ENCODE measurements at regions of chr12 and their contacts with region 1.

Region 1: GRCh38 chr12:11581179-11581755 is 68.2 kb upstream of the ETV6 start:
- DNase-seq: peak in 3 of 10 donors; percentile 42 to 62 (median 51)
- H3K4me3 ChIP-seq: no peak overlapping the region
- H3K27ac ChIP-seq: no peak overlapping the region
- H3K27me3 ChIP-seq: no peaks in the 10 kb centered on the region
- CTCF ChIP-seq: peak; percentile 66 to 95 (median 82)

Region 2: DNA sequence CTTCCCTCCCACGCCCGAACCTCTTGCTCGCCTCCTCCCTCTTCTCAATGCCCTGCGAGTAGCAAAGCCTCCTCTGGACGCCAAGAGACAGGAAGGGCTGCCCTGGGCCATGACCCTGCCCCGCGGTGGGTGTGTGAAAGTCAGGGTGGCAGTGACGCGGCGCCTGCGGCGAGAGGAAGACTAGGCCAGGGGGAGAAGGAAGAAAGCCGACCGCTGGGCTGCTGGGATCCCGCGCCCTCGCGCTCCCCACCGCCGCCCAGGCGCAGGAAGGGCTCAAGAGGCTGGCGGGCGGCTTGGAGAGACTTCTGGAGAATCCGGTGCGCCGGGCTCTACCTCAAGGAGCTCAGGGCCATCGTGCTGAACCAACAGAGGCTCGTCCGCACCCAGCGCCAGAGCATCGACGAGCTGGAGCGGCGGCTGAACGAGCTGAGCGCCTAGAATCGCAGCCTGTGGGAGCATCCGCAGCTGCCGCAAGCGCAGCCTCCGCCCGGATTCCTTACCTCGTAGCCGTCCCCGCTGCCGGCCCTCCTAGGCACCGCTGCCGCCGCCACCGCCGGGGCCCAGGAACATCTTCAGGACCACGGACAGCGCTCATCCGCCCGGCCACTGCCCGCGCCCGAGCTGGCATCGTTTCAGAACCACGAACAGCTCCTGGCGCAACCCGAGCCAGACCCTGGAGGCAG is 80.9 kb before region 1 on chr12:
- intact Hi-C with region 1: no loop called
- DNase-seq: peak; percentile 27 to 80 (median 64)
- H3K4me3 ChIP-seq: peak overlapping the region in 58 of 59 donors; percentile 23 to 71 (median 55)
- H3K27ac ChIP-seq: peak overlapping the region in 57 of 59 donors; percentile 24 to 92 (median 82)
- H3K27me3 ChIP-seq: no peaks in the 10 kb centered on the region
- CTCF ChIP-seq: peak in 27 of 56 donors; percentile 10 to 47 (median 25)

Region 3: DNA sequence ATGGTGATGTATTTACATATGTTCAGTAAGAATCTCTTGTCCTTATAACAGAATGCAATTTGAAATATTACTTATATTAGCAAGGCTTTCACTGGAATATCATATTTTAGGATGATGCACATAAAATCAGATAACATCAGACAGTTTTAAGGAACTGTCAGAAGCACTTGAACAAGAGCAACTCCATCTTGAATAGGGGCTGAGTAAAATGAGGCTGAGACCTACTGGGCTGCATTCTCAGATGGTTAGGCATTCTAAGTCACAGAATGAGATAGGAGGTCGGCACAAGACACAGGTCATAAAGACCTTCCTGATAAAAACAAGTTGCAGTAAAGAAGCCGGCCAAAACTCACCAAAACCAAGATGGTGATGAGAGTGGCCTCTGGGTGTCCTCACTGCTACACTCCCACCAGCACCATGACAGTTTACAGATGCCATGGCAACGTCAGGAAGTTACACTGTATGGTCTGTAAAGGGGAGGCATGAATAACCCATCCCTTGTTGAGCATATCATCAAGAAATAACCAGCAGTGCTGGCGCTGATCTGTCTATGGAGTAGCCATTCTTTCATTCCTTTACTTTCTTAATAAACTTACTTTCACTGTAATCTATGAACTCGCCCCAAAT is 40.6 kb after region 1 on chr12:
- intact Hi-C with region 1: loop called in 1 of 2 experiments (anchors 1 kb)
- DNase-seq: peak in 2 of 10 donors; percentile 15 to 35
- H3K4me3 ChIP-seq: no peak overlapping the region
- H3K27ac ChIP-seq: no peak overlapping the region
- H3K27me3 ChIP-seq: no peaks in the 10 kb centered on the region
- CTCF ChIP-seq: peak in 50 of 56 donors; percentile 11 to 70 (median 44)

Region 4: GRCh38 chr12:12032851-12033588 is 451.8 kb after region 1 on chr12:
- intact Hi-C with region 1: loop called (anchors 1 kb)
- DNase-seq: peak; percentile 67 to 89 (median 80)
- H3K4me3 ChIP-seq: peak overlapping the region; percentile 24 to 71 (median 53)
- H3K27ac ChIP-seq: peak overlapping the region in 55 of 59 donors; percentile 22 to 90 (median 79)
- H3K27me3 ChIP-seq: no peaks in the 10 kb centered on the region
- CTCF ChIP-seq: peak; percentile 82 to 97 (median 91)

Region 5: DNA sequence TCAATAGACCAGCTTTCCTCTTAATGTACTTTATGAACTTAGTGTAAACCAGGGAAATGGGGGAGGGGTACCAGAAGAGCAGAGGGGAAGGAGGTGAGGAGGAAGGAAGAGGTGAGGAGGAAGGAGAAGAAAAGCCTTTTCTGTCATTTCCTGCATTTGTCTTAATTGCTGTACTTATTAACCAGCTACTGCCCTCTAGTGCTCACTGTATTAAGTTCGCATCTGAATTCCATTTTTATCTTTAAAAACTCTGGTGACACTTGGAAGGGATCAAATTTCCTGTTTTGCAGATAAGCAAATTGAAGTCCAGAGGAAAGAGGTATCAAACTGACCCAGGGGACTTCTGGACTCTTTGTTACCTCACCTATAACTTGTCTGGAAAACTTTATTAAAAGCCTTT is 746.5 kb after region 1 on chr12:
- intact Hi-C with region 1: loop called in 1 of 2 experiments (anchors 10 kb)
- DNase-seq: no peak
- H3K4me3 ChIP-seq: peak overlapping the region in 1 of 59 donors; percentile 25
- H3K27ac ChIP-seq: peak overlapping the region in 13 of 59 donors; percentile 9 to 38 (median 21)
- H3K27me3 ChIP-seq: no peaks in the 10 kb centered on the region
- CTCF ChIP-seq: peak; percentile 43 to 91 (median 75)

Region 6: GRCh38 chr12:12704593-12705230 is 1123.4 kb after region 1 on chr12:
- intact Hi-C with region 1: loop called in 1 of 2 experiments (anchors 10 kb)
- DNase-seq: peak in 7 of 10 donors; percentile 47 to 73 (median 59)
- H3K4me3 ChIP-seq: peak overlapping the region in 3 of 59 donors; percentile 2 to 24 (median 2)
- H3K27ac ChIP-seq: peak overlapping the region in 42 of 59 donors; percentile 4 to 74 (median 44)
- H3K27me3 ChIP-seq: no peaks in the 10 kb centered on the region
- CTCF ChIP-seq: peak; percentile 74 to 100 (median 93)